Stomach (tissue), 19 donors: ENCODE measurements at regions of chr11 and their contacts with region 1.

Region 1: DNA sequence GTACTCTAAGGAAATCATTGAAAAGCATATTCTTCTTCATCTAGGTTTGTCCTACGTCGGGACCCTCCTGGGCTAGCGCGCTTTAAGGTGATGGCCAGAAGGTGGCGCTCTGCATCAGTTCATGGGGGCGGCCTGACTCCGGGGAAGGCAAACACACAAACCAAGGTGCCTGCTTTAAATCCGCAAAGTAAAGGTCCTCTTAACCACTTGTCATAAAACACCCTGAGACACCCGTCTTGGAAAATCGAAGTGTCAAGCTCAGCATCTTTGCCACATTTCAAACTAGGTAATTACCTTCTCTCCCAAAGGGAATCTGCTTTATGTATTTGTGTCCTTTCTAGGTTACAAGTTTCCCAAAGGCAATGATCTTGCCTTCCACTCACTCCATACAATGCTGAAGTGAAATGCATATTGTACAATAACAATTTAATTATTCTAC is 33.9 kb downstream of the LMO2 start:
- DNase-seq: peak; percentile 77 to 89
- H3K4me3 ChIP-seq: no peak overlapping the region
- H3K27ac ChIP-seq: no peak overlapping the region
- H3K4me1 ChIP-seq: peaks cover 0 to 4% (median 0%) of the 10 kb centered on the region in 4 donors
- H3K27me3 ChIP-seq: peaks cover 0 to 10% (median 0%) of the 10 kb centered on the region in 3 donors
- CTCF ChIP-seq: peak in 5 of 7 experiments; percentile 78 to 86 (median 79)
- EP300 ChIP-seq: no peak
- POLR2A ChIP-seq: no peak

Region 2: DNA sequence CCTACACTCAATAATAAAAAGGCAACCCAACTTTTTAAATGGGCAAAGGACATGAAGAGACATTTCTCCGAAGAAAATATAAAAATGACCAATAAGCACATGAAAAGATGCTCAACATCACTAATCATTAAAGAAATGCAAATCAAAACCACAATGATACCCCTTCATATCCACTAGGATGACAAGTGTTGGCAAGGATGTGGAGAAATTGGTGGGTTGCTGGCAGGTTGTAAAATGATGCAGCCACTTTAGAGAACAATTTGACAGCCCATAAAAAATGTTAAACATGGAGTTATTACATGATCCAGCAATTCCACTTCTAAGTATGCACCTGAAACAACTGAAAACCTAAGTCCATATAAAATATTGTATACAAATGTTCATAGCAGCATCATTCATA is 107.1 kb after region 1 on chr11:
- intact Hi-C with region 1: loop called (anchors 5 kb)
- DNase-seq: no peak
- H3K4me3 ChIP-seq: no peak overlapping the region
- H3K27ac ChIP-seq: no peak overlapping the region
- H3K4me1 ChIP-seq: no peaks in the 10 kb centered on the region
- H3K27me3 ChIP-seq: peaks cover 0 to 2% (median 0%) of the 10 kb centered on the region in 3 donors
- CTCF ChIP-seq: no peak
- EP300 ChIP-seq: no peak
- POLR2A ChIP-seq: no peak

Region 3: DNA sequence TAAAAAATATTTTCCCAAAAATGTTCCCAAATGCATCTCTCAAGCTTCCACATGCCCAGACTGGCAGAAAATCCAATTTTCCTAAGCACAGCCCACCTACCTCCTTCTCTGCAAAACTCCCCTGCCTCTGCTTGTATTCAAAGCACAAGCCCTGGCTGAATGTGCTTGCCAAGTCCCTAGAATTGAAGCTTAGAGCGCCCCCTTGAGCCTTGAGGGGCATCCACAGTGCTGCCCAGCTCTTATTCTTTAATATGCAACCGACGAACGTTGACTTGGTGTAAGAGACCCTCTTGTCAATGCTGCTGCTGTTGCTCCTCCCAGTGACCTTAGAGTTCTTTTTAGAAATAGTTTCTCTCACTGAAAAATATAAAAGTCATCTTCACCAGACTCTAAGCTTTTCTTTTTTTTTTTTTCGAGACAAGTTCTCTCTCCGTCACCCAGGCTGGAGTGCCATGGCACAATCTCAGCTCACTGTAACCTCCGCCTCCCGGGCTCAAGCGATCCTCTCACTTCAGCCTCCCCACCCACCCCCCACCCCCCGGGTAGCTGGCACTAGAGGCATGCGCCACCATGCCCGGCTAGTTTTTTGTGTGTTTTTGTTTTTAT is 130.1 kb after region 1 on chr11:
- intact Hi-C with region 1: loop called (anchors 5 kb)
- DNase-seq: peak; percentile 73 to 89
- H3K4me3 ChIP-seq: no peak overlapping the region
- H3K27ac ChIP-seq: no peak overlapping the region
- H3K4me1 ChIP-seq: no peaks in the 10 kb centered on the region
- H3K27me3 ChIP-seq: peaks cover 0 to 7% (median 0%) of the 10 kb centered on the region in 3 donors
- CTCF ChIP-seq: peak in 4 of 7 experiments; percentile 56 to 80 (median 72)
- EP300 ChIP-seq: no peak
- POLR2A ChIP-seq: no peak